MCF 10A (cell line): ENCODE measurements at regions of chrX and their contacts with region 1.

Region 1: GRCh38 chrX:28586981-28587551 is at the start of gene IL1RAPL1:
- DNase-seq: peak; percentile 51
- H3K4me3 Mint-ChIP-seq: no peak within 1 kb of the TSS
- H3K27ac Mint-ChIP-seq: no peak within 1 kb of the TSS
- H3K4me1 Mint-ChIP-seq: no peaks in the 10 kb centered on the region
- H3K27me3 Mint-ChIP-seq: no peaks in the 10 kb centered on the region
- CTCF ChIP-seq: peak; percentile 14
- total RNA-seq, gene IL1RAPL1: not detected in 2 replicates

Region 2: GRCh38 chrX:28549838-28550237 is 37.2 kb before region 1 on chrX:
- CTCF ChIA-PET with region 1: no interaction called
- POLR2A ChIA-PET with region 1: no interaction called
- intact Hi-C with region 1: no loop called
- DNase-seq: no peak
- H3K4me3 Mint-ChIP-seq: no peak overlapping the region
- H3K27ac Mint-ChIP-seq: no peak overlapping the region
- H3K4me1 Mint-ChIP-seq: peaks cover 9% of the 10 kb centered on the region
- H3K27me3 Mint-ChIP-seq: no peaks in the 10 kb centered on the region
- CTCF ChIP-seq: no peak

Region 3: GRCh38 chrX:28802625-28803024 is 215.6 kb after region 1 on chrX:
- CTCF ChIA-PET with region 1: interaction called, 4 read pairs
- POLR2A ChIA-PET with region 1: no interaction called
- intact Hi-C with region 1: loop called (anchors 1 kb)
- DNase-seq: peak; percentile 5
- H3K4me3 Mint-ChIP-seq: no peak overlapping the region
- H3K27ac Mint-ChIP-seq: no peak overlapping the region
- H3K4me1 Mint-ChIP-seq: no peaks in the 10 kb centered on the region
- H3K27me3 Mint-ChIP-seq: no peaks in the 10 kb centered on the region
- CTCF ChIP-seq: peak; percentile 21

Region 4: GRCh38 chrX:29044423-29045184 is 457.5 kb after region 1 on chrX:
- CTCF ChIA-PET with region 1: interaction called, 4 read pairs
- POLR2A ChIA-PET with region 1: no interaction called
- intact Hi-C with region 1: loop called (anchors 1 kb)
- DNase-seq: peak; percentile 23
- H3K4me3 Mint-ChIP-seq: no peak overlapping the region
- H3K27ac Mint-ChIP-seq: no peak overlapping the region
- H3K4me1 Mint-ChIP-seq: no peaks in the 10 kb centered on the region
- H3K27me3 Mint-ChIP-seq: no peaks in the 10 kb centered on the region
- CTCF ChIP-seq: peak; percentile 19

Region 5: DNA sequence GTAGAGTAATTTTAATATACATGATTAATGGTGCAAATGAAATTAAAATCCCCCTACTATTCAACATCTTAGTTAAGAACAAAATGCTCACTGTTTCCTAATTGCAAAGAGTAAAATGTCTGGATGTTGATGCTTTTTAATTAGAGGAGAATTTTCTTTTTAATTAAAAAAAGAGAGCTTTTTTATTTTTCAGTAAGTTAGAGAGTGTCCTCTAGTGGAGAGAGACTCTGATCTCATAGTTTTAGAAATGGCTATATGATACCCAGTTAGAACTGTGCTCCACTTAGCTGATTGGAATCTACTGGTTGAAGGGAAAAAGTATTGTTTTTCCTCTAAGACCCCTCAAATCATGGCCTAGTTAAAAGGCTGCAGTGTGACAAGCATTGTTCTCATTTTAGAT is 1316.3 kb after region 1 on chrX:
- CTCF ChIA-PET with region 1: no interaction called
- POLR2A ChIA-PET with region 1: no interaction called
- intact Hi-C with region 1: loop called (anchors 5 kb)
- DNase-seq: peak; percentile 9
- H3K4me3 Mint-ChIP-seq: no peak overlapping the region
- H3K27ac Mint-ChIP-seq: no peak overlapping the region
- H3K4me1 Mint-ChIP-seq: no peaks in the 10 kb centered on the region
- H3K27me3 Mint-ChIP-seq: peaks cover 41% of the 10 kb centered on the region
- CTCF ChIP-seq: peak; percentile 34